HepG2 (cell line): ENCODE measurements at regions of chr2 and their contacts with region 1.

Region 1: DNA sequence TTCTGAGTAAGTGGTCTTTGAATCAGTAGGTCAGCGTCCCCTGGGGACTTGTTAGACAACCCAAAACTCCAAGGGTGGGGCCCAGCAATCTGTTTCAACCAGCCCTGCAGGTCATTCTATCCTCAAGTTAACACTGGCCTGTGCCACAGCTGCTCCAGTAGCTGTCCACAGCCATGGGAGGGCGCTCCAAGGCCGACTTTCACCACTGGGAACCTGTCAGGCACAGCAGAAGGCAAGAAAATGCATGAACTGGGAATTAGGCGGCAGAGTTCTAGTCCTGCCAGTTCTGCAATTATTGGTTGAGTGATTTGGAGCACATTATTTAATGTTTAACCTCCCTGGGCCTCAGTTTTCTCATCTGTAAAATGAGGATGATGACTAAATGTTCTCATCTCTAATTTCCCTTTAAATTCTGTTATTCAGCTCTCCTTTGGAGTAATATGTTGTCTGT is 17.4 kb upstream of the MRPL33 start:
- DNase-seq: peak; percentile 79
- ATAC-seq: peak; percentile 86
- H3K4me3 ChIP-seq: peak overlapping the region; percentile 82 to 90 (median 89)
- H3K27ac ChIP-seq: no peak overlapping the region
- H3K4me1 ChIP-seq: peaks cover 62% of the 10 kb centered on the region
- H3K27me3 ChIP-seq: no peaks in the 10 kb centered on the region
- CTCF ChIP-seq: peak; percentile 99
- EP300 ChIP-seq: peak in 1 of 2 experiments; percentile 39; a peak in 2 of 4 replicates
- POLR2A ChIP-seq: no peak
- RAD21 ChIP-seq: peak; percentile 98

Region 2: GRCh38 chr2:27501042-27501441 is 253.1 kb before region 1 on chr2:
- CTCF ChIA-PET with region 1: no interaction called
- POLR2A ChIA-PET with region 1: no interaction called
- in situ Hi-C with region 1: no loop called
- intact Hi-C with region 1: no loop called
- DNase-seq: no peak
- ATAC-seq: no peak
- H3K4me3 ChIP-seq: no peak overlapping the region
- H3K27ac ChIP-seq: no peak overlapping the region
- H3K4me1 ChIP-seq: peaks cover 45% of the 10 kb centered on the region
- H3K27me3 ChIP-seq: no peaks in the 10 kb centered on the region
- CTCF ChIP-seq: no peak
- EP300 ChIP-seq: no peak
- POLR2A ChIP-seq: no peak
- RAD21 ChIP-seq: no peak

Region 3: GRCh38 chr2:27655155-27655951 is 98.8 kb before region 1 on chr2:
- CTCF ChIA-PET with region 1: no interaction called
- POLR2A ChIA-PET with region 1: no interaction called
- in situ Hi-C with region 1: no loop called
- intact Hi-C with region 1: no loop called
- DNase-seq: no peak
- ATAC-seq: no peak
- H3K4me3 ChIP-seq: no peak overlapping the region
- H3K27ac ChIP-seq: no peak overlapping the region
- H3K4me1 ChIP-seq: no peaks in the 10 kb centered on the region
- H3K27me3 ChIP-seq: no peaks in the 10 kb centered on the region
- CTCF ChIP-seq: no peak
- EP300 ChIP-seq: no peak
- POLR2A ChIP-seq: no peak
- RAD21 ChIP-seq: no peak

Region 4: GRCh38 chr2:27697660-27698059 is 56.5 kb before region 1 on chr2:
- CTCF ChIA-PET with region 1: no interaction called
- POLR2A ChIA-PET with region 1: no interaction called
- in situ Hi-C with region 1: no loop called
- intact Hi-C with region 1: no loop called
- DNase-seq: no peak
- ATAC-seq: no peak
- H3K4me3 ChIP-seq: no peak overlapping the region
- H3K27ac ChIP-seq: no peak overlapping the region
- H3K4me1 ChIP-seq: peaks cover 15% of the 10 kb centered on the region
- H3K27me3 ChIP-seq: no peaks in the 10 kb centered on the region
- CTCF ChIP-seq: no peak
- EP300 ChIP-seq: no peak
- POLR2A ChIP-seq: no peak
- RAD21 ChIP-seq: no peak

Region 5: DNA sequence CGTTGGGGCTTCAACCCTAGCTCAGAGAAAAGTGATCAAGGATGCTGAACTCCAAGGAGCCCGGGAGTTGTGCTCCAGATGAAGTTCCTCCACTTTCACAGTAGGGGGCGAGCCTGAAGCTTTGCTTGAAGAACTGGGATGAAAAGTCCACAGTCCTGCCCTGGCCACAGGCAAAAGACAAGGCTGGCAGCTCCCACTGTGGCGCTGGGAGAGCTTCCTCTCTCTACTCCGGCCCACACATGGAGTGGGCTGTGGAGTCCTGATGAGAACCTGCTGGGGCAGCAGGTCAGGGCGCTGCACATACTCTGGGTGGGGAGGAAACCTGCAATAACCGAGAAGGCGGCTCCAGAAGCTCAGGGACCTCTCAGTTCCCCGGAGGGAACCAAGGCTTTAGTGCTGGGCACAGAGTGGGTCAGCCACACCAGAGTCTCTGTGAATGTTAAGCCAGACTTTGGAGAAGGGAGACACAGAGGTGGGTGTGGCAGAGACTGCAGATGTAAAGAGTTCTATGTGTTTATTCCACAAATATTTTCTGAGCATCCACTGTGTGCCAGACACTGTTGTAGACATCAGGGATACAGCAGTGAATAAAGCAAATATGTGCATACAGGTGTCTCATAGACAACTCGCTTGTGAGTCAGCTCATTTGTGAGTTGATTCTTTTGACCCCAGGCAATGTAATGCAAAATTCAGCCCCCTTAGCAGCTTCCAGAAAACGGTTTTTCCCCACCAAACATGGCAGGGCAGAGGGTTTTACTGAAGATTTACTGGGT is 30.6 kb before region 1 on chr2:
- CTCF ChIA-PET with region 1: interaction called, 10 read pairs
- POLR2A ChIA-PET with region 1: interaction called, 248 read pairs
- in situ Hi-C with region 1: no loop called
- intact Hi-C with region 1: loop called (anchors 1 kb)
- DNase-seq: peak; percentile 75
- ATAC-seq: peak; percentile 79
- H3K4me3 ChIP-seq: peak overlapping the region; percentile 22 to 69 (median 33); a peak in 4 of 6 replicates
- H3K27ac ChIP-seq: no peak overlapping the region
- H3K4me1 ChIP-seq: peaks cover 58% of the 10 kb centered on the region
- H3K27me3 ChIP-seq: no peaks in the 10 kb centered on the region
- CTCF ChIP-seq: peak; percentile 94
- EP300 ChIP-seq: no peak
- POLR2A ChIP-seq: no peak
- RAD21 ChIP-seq: peak; percentile 85

Region 6: DNA sequence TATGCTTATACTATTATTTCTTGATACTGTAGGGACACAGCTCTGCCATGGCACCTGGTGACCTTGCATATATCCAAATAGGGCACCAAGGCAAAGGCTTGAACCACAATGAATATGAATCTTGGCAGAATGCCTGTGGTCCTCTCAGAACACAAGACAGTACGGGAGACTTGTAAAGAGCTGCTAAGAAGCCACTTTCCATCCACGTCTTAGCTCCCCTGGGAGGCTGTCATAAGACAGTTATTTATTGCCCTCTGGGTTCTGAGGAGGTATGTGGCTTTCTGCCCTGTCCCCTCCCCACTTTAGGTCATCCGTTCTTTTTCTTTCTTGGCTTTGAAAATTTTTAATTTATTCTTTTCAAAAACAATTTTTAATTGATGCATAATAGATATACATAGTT is 12.5 kb before region 1 on chr2:
- CTCF ChIA-PET with region 1: no interaction called
- POLR2A ChIA-PET with region 1: interaction called, 150 read pairs
- in situ Hi-C with region 1: no loop called
- intact Hi-C with region 1: loop called (anchors 1 kb)
- DNase-seq: no peak
- ATAC-seq: no peak
- H3K4me3 ChIP-seq: no peak overlapping the region
- H3K27ac ChIP-seq: no peak overlapping the region
- H3K4me1 ChIP-seq: peaks cover 56% of the 10 kb centered on the region
- H3K27me3 ChIP-seq: no peaks in the 10 kb centered on the region
- CTCF ChIP-seq: no peak
- EP300 ChIP-seq: no peak
- POLR2A ChIP-seq: no peak
- RAD21 ChIP-seq: no peak

Region 7: GRCh38 chr2:27771548-27772335 is 17.6 kb after region 1 on chr2 and contains the start of gene MRPL33:
- CTCF ChIA-PET with region 1: no interaction called
- POLR2A ChIA-PET with region 1: interaction called, 13 read pairs
- in situ Hi-C with region 1: no loop called
- intact Hi-C with region 1: no loop called
- DNase-seq: peak; percentile 93
- ATAC-seq: peak; percentile 97
- H3K4me3 ChIP-seq: peak within 1 kb of the TSS; percentile 93 to 98 (median 94)
- H3K27ac ChIP-seq: peak within 1 kb of the TSS; percentile 85
- H3K4me1 ChIP-seq: peaks cover 39% of the 10 kb centered on the region
- H3K27me3 ChIP-seq: no peaks in the 10 kb centered on the region; a peak in 1 of 5 replicates
- CTCF ChIP-seq: peak; percentile 33
- EP300 ChIP-seq: peak in 1 of 2 experiments; percentile 54; a peak in 1 of 4 replicates
- POLR2A ChIP-seq: peak; percentile 91 to 92
- RAD21 ChIP-seq: peak; percentile 35; the same call in 1 of the 2 replicates
- total RNA-seq, gene MRPL33: 218 and 227 TPM in 2 replicates

Region 8: DNA sequence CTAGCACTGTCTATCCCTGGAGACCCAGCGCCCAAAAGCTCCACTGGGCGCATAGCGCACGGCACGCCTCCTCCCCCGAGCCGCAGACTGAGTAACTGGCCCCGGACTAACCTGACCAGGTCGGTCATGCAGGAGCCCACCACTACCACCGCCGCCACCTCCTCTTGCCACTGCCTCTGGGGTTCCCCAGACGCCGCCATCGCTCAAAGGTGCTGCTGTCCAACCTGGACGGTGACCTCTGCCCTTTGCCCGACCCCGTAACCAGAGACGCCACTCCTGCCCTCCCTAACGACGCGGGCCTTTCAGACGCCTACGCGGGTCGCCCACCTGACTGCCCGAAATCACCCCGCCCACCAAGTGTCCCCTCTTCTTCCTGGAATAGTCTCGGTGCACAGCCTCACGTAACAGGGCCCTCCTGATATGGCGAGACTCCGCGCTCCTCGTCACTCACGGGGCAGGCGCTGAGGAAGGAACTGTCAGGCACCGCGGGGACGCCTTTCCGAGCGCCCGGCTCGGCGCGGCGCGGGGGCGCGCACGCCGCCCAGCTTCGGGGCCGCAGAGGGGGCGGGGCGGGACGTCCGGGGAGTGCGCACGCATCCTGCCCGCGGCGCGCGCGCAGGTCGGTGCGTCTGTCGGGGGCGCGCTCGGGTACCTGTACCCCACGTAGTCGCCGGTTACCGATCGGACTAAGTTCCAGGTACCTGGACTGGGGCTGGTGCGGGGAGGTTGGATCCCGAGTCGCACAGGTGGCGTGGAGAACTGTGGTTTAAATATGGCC is 136.2 kb after region 1 on chr2 and contains the starts of genes BABAM2 and RBKS:
- CTCF ChIA-PET with region 1: no interaction called
- POLR2A ChIA-PET with region 1: interaction called, 20 read pairs
- in situ Hi-C with region 1: no loop called
- intact Hi-C with region 1: loop called (anchors 5 kb)
- DNase-seq: peak; percentile 89
- ATAC-seq: peak; percentile 89
- H3K4me3 ChIP-seq: peak within 1 kb of the TSS; percentile 92 to 93 (median 93)
- H3K27ac ChIP-seq: peak within 1 kb of the TSS; percentile 93
- H3K4me1 ChIP-seq: peaks cover 34% of the 10 kb centered on the region
- H3K27me3 ChIP-seq: no peaks in the 10 kb centered on the region; a peak in 1 of 5 replicates
- CTCF ChIP-seq: peak; percentile 17; the same call in 1 of the 2 replicates
- EP300 ChIP-seq: peak in 1 of 2 experiments; percentile 70; a peak in 1 of 4 replicates
- POLR2A ChIP-seq: peak; percentile 71 to 77
- RAD21 ChIP-seq: peak; percentile 60
- total RNA-seq, gene BABAM2: 24.9 and 34.8 TPM in 2 replicates
- total RNA-seq, gene RBKS: 7.7 and 11.7 TPM in 2 replicates

Region 9: DNA sequence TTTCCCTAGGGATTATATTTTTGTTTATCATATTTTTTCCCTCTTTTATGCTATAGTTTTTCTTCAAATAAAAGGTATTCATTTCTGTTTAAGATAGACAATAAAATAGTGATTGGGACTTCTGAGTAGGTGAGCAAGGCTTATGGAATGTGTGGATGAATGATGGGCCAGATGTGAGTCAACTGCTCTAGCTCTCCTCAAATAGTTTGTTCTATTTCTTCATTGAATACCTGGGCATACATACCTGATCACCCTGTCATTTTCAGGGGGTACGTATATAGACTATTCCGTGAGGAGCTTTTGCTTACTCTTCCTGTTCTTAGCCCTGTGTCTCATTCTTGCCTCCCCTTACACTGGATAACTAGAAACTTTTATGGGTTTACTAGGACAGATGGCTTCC is 178.2 kb after region 1 on chr2:
- CTCF ChIA-PET with region 1: no interaction called
- POLR2A ChIA-PET with region 1: no interaction called
- in situ Hi-C with region 1: no loop called
- intact Hi-C with region 1: no loop called
- DNase-seq: peak; percentile 59
- ATAC-seq: no peak
- H3K4me3 ChIP-seq: no peak overlapping the region
- H3K27ac ChIP-seq: no peak overlapping the region
- H3K4me1 ChIP-seq: peaks cover 19% of the 10 kb centered on the region
- H3K27me3 ChIP-seq: no peaks in the 10 kb centered on the region
- CTCF ChIP-seq: no peak
- EP300 ChIP-seq: no peak
- POLR2A ChIP-seq: no peak
- RAD21 ChIP-seq: no peak

Region 10: DNA sequence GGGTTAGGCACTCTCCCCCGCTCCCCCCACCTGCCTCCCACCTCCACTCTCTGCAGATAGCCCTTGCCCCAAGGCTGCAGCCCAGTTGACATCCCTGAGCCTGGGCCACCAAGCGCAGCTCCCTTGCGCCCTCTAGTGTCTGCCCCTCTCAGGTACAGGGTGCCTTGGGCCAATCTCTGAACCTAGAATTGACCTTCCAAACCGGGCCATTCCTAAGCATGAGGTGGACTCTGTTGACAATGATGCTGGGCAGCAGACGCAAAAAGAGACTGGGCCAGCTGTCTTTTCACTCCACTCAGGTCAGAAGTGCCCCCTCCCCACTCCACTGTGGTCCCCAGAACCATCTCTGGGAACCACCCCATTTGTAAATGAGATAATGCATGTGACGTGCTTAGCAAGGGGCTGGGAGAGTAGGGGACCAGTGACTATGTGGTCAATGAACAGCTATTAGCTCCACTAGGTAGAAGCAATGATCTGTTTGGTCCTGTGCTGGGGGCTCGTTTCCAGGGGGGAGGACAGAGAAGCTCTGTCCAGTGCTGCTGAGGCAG is 698.4 kb after region 1 on chr2:
- CTCF ChIA-PET with region 1: interaction called, 6 read pairs
- POLR2A ChIA-PET with region 1: no interaction called
- in situ Hi-C with region 1: no loop called
- intact Hi-C with region 1: loop called (anchors 1 kb)
- DNase-seq: peak; percentile 58
- ATAC-seq: peak; percentile 92
- H3K4me3 ChIP-seq: no peak overlapping the region
- H3K27ac ChIP-seq: no peak overlapping the region
- H3K4me1 ChIP-seq: no peaks in the 10 kb centered on the region
- H3K27me3 ChIP-seq: peaks cover 0 to 7% of the 10 kb centered on the region in 2 experiments; a peak in 3 of 5 replicates
- CTCF ChIP-seq: peak; percentile 99
- EP300 ChIP-seq: no peak
- POLR2A ChIP-seq: no peak
- RAD21 ChIP-seq: peak; percentile 91